Calu3 (cell line): ENCODE measurements at regions of chr6 and their contacts with region 1.

Region 1: DNA sequence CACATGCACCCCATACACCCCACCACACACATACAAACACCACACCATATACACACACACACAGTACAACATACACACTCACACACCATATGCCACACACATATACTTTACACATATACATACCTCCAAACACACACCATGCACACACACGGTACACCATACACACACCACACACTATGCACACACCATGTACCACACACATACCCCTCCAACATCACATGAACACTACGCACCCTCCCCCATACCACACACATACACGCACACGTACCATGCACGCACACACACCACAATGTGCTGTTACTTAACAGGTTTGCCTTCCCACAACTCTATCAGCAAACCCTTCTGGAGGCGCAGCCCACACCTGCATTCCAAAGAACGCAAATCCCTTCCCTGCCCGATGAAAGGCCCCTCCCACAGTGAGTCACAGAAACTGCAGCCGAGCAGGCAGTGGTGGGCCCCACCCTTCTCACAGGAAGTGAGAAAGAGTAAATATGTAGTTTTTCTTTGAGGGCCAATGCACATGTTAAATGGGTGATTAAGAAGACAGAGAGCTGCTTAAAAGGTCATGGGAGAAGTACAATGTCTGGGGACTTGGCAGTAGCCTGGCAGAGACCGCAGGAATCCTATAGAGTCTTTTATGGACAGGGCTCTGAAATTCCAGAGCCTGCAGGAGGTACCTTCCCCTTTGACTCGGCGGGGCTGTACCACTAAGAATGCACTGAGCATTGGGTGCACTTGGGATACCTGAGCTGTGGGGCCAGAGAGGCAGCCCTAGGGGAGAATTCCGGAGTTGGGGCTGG is 34.1 kb upstream of the EZR start:
- DNase-seq: peak; percentile 97
- H3K4me3 Mint-ChIP-seq: no peak overlapping the region
- H3K27ac Mint-ChIP-seq: no peak overlapping the region
- H3K4me1 Mint-ChIP-seq: peaks cover 40% of the 10 kb centered on the region
- H3K27me3 Mint-ChIP-seq: no peaks in the 10 kb centered on the region
- CTCF ChIP-seq: no peak

Region 2: DNA sequence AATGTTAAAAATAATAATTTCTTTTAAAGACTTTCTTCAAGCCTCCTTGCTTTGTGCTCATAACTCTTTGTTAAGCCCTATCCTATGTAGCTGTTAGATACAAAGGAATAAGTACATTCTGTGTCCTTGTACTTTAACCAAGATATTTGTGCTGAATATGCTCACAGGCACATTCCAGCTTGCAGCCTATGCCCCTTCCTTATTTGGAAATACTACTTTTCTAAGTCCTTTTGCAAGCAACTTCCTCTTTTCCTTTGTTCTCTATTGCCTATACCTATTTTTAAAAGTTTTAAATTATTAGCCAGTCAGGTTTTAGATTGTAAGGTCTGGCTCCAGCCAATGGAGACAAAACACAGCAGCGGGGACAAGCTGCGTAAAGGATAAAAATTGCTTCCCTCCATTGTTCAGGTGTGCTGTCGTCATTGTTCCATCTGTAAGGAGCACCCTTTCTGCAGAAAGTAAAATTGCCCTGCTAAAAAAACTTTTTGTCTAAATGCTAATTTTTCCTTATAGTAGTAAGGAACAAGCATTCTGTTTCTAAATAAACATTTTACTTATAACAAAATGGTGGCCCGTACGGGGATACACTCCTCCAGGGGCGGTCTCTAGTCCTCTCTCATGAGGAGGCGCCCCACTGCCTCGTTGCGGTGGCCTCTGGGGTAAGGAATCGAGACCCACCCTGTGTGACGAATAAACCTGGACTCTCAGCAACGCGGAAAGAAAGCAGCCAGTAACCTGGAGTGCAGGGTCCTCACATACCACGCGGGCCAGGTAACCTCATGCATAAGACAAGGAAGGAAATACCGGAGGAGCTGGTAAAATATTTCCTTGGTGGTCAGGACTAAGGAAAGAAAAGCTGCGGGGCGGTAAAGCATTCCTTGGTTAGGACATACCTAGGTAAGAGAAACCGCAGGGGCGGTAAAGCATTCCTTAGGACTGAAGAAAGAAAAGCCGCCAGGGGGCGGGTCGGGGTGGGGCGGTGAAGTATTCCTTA is 123.1 kb before region 1 on chr6:
- CTCF ChIA-PET with region 1: no interaction called
- intact Hi-C with region 1: loop called (anchors 2 kb)
- DNase-seq: peak; percentile 95
- H3K4me3 Mint-ChIP-seq: peak overlapping the region; percentile 11
- H3K27ac Mint-ChIP-seq: peak overlapping the region; percentile 87
- H3K4me1 Mint-ChIP-seq: peaks cover 16% of the 10 kb centered on the region
- H3K27me3 Mint-ChIP-seq: no peaks in the 10 kb centered on the region
- CTCF ChIP-seq: no peak

Region 3: DNA sequence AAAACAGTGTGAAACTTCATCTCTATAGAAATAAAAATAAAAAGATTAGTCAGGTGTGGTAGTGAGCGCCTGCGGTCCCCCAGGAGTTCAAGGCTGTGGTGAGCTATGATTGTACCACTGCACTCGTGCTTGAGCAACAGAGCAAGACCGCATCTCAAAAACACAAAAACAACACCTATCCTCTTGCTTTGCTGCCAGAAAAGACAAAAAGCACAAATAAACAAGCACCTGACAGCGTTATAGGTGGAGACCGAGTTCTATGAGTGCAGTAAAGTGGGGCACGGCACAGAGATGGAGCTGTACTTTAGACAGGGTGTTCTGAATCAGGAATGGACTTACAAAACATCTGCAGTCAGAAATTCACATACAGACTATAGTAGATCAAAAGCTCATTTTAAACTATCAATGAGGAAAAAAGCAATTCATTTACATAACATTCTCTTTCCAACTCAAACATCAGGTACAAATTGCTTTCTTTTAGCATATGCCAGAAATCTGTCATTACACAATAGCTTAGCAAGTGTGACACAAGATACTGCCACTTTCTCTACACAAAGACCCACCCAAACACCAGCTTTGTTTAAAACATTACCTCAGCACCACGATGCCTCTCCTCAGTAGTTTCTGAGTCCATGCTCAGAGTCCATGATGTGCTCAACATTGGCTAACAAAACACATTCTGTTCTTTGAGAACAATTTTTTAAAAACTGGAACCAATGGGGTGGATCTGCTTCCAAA is 44.2 kb before region 1 on chr6:
- CTCF ChIA-PET with region 1: interaction called, 4 read pairs
- intact Hi-C with region 1: loop called (anchors 2 kb)
- DNase-seq: no peak
- H3K4me3 Mint-ChIP-seq: peak overlapping the region; percentile 85
- H3K27ac Mint-ChIP-seq: peak overlapping the region; percentile 97
- H3K4me1 Mint-ChIP-seq: peaks cover 77% of the 10 kb centered on the region
- H3K27me3 Mint-ChIP-seq: no peaks in the 10 kb centered on the region
- CTCF ChIP-seq: no peak

Region 4: GRCh38 chr6:158819213-158819909 is 33.9 kb before region 1 on chr6 and contains the start of gene EZR:
- CTCF ChIA-PET with region 1: interaction called, 4 read pairs
- intact Hi-C with region 1: loop called (anchors 1 kb)
- DNase-seq: peak; percentile 87
- H3K4me3 Mint-ChIP-seq: peak within 1 kb of the TSS; percentile 85
- H3K27ac Mint-ChIP-seq: peak within 1 kb of the TSS; percentile 97
- H3K4me1 Mint-ChIP-seq: peaks cover 3% of the 10 kb centered on the region
- H3K27me3 Mint-ChIP-seq: no peaks in the 10 kb centered on the region
- CTCF ChIP-seq: no peak
- total RNA-seq, gene EZR: 935 and 954 TPM in 2 replicates

Region 5: GRCh38 chr6:158910484-158911348 is 57.4 kb after region 1 on chr6:
- CTCF ChIA-PET with region 1: interaction called, 7 read pairs
- intact Hi-C with region 1: loop called (anchors 1 kb)
- DNase-seq: peak; percentile 76
- H3K4me3 Mint-ChIP-seq: peak overlapping the region; percentile 49
- H3K27ac Mint-ChIP-seq: peak overlapping the region; percentile 95
- H3K4me1 Mint-ChIP-seq: peaks cover 63% of the 10 kb centered on the region
- H3K27me3 Mint-ChIP-seq: no peaks in the 10 kb centered on the region
- CTCF ChIP-seq: no peak